ENCODE measurements at regions of chr11 and their contacts with region 1.

Region 1: DNA sequence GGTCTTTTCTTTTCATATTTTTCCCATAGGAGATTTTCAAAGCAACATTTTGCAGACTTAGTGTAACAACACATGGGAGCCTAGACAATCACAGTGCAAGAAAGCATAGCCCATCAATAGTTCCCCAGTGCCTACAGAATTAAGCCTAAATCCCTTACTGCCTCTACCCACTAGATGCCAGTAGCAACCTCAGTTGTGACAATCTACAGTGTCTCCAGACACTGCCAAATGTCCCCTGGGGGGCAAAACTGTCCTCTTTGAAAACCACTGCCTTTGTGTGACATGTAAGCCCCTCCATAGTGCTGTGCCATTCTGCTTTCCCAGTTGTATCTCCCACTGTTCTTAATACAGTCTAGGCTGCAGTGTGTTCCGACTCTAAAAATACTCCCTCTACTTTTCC is 1329.0 kb downstream of the LRRC4C start:
- DNase-seq: no peak
- H3K4me3 ChIP-seq: no peak overlapping the region
- H3K27ac ChIP-seq: no peak overlapping the region
- H3K4me1 ChIP-seq: no peaks in the 10 kb centered on the region
- H3K27me3 ChIP-seq: no peaks in the 10 kb centered on the region
- CTCF ChIP-seq: no peak

Region 2: GRCh38 chr11:40037005-40037404 is 93.4 kb before region 1 on chr11:
- CTCF ChIA-PET with region 1: no interaction called
- dilution Hi-C with region 1: no loop called
- in situ Hi-C with region 1: no loop called
- intact Hi-C with region 1: no loop called
- DNase-seq: no peak
- H3K4me3 ChIP-seq: no peak overlapping the region
- H3K27ac ChIP-seq: no peak overlapping the region
- H3K4me1 ChIP-seq: no peaks in the 10 kb centered on the region
- H3K27me3 ChIP-seq: no peaks in the 10 kb centered on the region
- CTCF ChIP-seq: no peak

Region 3: DNA sequence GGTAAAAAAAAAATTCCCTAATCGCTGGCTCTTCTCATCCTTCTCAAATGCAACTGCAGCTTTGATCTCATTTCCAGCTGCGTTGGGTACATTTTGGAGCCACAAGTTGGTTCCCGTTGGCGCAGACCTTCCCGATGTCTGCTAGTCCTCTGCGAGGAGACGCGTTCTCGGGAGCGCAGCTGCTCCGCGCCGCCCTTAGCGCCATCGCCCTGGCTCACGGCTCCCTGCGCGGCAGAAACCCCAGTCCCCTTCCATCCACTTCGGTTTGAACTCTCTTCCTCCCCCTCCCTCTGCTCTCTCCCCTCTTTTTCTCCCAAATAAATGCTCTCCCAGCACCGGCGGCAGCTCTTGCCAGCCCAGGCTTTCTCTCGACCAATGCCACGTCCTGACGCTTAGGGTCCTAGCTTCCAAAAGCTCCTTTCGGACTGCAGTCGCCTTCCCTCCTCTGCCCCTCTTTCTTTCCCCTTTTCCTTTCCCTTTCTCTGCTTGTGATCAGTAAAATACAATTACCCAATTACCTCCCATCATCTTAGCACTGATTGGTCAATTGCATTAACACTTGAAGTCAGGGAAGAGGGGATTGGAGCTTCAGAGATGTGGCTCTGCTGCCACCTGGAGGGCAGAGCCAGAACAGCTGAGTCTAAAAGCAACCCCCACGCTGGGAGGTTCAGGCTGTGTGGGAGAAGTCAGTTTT is 163.4 kb after region 1 on chr11:
- CTCF ChIA-PET with region 1: no interaction called
- dilution Hi-C with region 1: no loop called
- in situ Hi-C with region 1: no loop called
- intact Hi-C with region 1: loop called (anchors 2 kb)
- DNase-seq: peak; percentile 72
- H3K4me3 ChIP-seq: peak overlapping the region; percentile 37 to 59 (median 59)
- H3K27ac ChIP-seq: no peak overlapping the region
- H3K4me1 ChIP-seq: peaks cover 2% of the 10 kb centered on the region
- H3K27me3 ChIP-seq: peaks cover 1% of the 10 kb centered on the region
- CTCF ChIP-seq: peak; percentile 90 to 91